A549 (cell line): ENCODE measurements at regions of chr3 and their contacts with region 1.

Region 1: GRCh38 chr3:128056258-128056657 is 4.0 kb downstream of the SEC61A1 start:
- DNase-seq: no peak
- ATAC-seq: no peak
- H3K4me3 ChIP-seq: no peak overlapping the region
- H3K27ac ChIP-seq: no peak overlapping the region
- H3K4me1 ChIP-seq: peaks cover 23% of the 10 kb centered on the region
- CTCF ChIP-seq: no peak
- EP300 ChIP-seq: no peak
- POLR2A ChIP-seq: no peak
- RAD21 ChIP-seq: no peak

Region 2: GRCh38 chr3:128041344-128041743 is 14.9 kb before region 1 on chr3:
- CTCF ChIA-PET with region 1: no interaction called
- POLR2A ChIA-PET with region 1: no interaction called
- DNase-seq: no peak
- ATAC-seq: no peak
- H3K4me3 ChIP-seq: no peak overlapping the region
- H3K27ac ChIP-seq: no peak overlapping the region
- H3K4me1 ChIP-seq: peaks cover 1% of the 10 kb centered on the region; the same call in 2 of the 3 replicates
- CTCF ChIP-seq: no peak
- EP300 ChIP-seq: no peak
- POLR2A ChIP-seq: no peak
- RAD21 ChIP-seq: no peak

Region 3: DNA sequence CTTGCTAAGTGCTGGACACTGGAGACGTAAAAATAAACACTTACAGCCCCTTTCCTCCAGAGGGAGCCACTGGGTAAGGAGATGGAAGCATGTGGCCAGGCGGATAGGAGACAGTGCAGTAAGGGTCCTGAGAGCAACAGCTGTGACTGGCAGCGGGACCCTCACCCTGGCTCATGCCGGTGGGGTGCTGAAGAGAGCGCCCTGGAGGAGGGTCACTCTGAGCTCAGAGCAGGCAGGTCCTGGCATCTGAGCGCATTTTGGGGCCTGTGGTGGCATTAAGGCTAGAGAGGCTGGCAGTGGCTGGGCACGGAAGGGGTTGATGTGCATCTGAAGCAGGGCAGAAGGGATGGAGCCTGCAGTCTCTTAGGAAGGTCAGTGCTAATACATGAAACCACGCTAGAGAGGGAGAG is 12.0 kb after region 1 on chr3:
- CTCF ChIA-PET with region 1: interaction called, 13 read pairs
- POLR2A ChIA-PET with region 1: no interaction called
- DNase-seq: peak; percentile 44 to 52
- ATAC-seq: peak; percentile 57 to 79; a peak in 4 of 6 replicates
- H3K4me3 ChIP-seq: no peak overlapping the region
- H3K27ac ChIP-seq: no peak overlapping the region
- H3K4me1 ChIP-seq: no peaks in the 10 kb centered on the region
- CTCF ChIP-seq: peak; percentile 41
- EP300 ChIP-seq: no peak
- POLR2A ChIP-seq: no peak
- RAD21 ChIP-seq: peak; percentile 25 to 37; a peak in 2 of 5 replicates

Region 4: DNA sequence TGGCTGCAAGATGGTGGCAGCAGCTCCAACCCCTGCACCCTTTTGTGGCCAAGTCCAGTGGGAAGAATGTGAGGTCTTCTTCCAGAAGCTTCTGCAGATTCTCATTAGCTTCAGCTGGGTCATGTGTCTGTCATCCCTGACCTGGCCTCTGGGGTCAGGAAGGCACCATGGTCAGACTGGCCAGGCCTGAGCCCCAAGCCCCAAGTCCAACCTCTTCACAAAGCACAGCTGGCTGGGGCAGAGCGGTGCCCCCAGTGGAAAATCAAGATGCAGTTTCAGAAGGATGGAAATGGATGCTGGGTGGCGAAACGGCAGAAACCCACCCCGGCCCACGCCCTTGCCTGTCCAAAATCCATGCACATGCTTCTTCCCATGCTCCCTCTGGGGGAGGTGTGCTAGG is 452.6 kb after region 1 on chr3:
- CTCF ChIA-PET with region 1: no interaction called
- POLR2A ChIA-PET with region 1: no interaction called
- DNase-seq: no peak
- ATAC-seq: no peak
- H3K4me3 ChIP-seq: no peak overlapping the region
- H3K27ac ChIP-seq: no peak overlapping the region
- H3K4me1 ChIP-seq: no peaks in the 10 kb centered on the region
- CTCF ChIP-seq: no peak
- EP300 ChIP-seq: no peak
- POLR2A ChIP-seq: no peak
- RAD21 ChIP-seq: no peak